Gastrocnemius medialis (tissue), 4 donors: ENCODE measurements at regions of chr7 and their contacts with region 1.

Region 1: GRCh38 chr7:17940302-17940883 is at the start of gene SNX13:
- DNase-seq: peak; percentile 87 to 88
- ATAC-seq: peak; percentile 93 to 95
- H3K4me3 ChIP-seq: peak within 1 kb of the TSS; percentile 84 to 97 (median 92)
- H3K27ac ChIP-seq: peak within 1 kb of the TSS; percentile 98 to 99 (median 98)
- H3K4me1 ChIP-seq: peaks cover 35 to 43% of the 10 kb centered on the region in 2 donors
- H3K27me3 ChIP-seq: no peaks in the 10 kb centered on the region
- CTCF ChIP-seq: peak in 4 of 5 experiments; percentile 9 to 44 (median 32)
- POLR2A ChIP-seq: peak; percentile 71 to 78
- total RNA-seq, gene SNX13: 74.9 to 154 (median 107) TPM

Region 2: GRCh38 chr7:17769918-17770317 is 170.5 kb before region 1 on chr7:
- in situ Hi-C with region 1: no loop called
- intact Hi-C with region 1: loop called (anchors 10 kb)
- DNase-seq: no peak
- ATAC-seq: peak in 1 of 2 donors; percentile 53
- H3K4me3 ChIP-seq: no peak overlapping the region
- H3K27ac ChIP-seq: no peak overlapping the region
- H3K4me1 ChIP-seq: no peaks in the 10 kb centered on the region
- H3K27me3 ChIP-seq: no peaks in the 10 kb centered on the region
- CTCF ChIP-seq: peak in 3 of 5 experiments; percentile 51 to 63 (median 52)
- POLR2A ChIP-seq: no peak